H1 (cell line): ENCODE measurements at regions of chr2 and their contacts with region 1.

Region 1: GRCh38 chr2:16105669-16106281 is 165.4 kb downstream of the MYCN start:
- DNase-seq: peak; percentile 83 to 97
- H3K4me3 ChIP-seq: peak overlapping the region; percentile 2 to 51 (median 27); a peak in 5 of 8 replicates
- H3K27ac ChIP-seq: peak overlapping the region; percentile 89
- H3K4me1 ChIP-seq: peaks cover 23 to 41% (median 33%) of the 10 kb centered on the region in 4 experiments
- H3K27me3 ChIP-seq: no peaks in the 10 kb centered on the region
- CTCF ChIP-seq: no peak
- EP300 ChIP-seq: peak in 1 of 2 experiments; percentile 83; a peak in 1 of 3 replicates
- POLR2A ChIP-seq: no peak
- RAD21 ChIP-seq: peak; percentile 20 to 31; a peak in 2 of 4 replicates

Region 2: DNA sequence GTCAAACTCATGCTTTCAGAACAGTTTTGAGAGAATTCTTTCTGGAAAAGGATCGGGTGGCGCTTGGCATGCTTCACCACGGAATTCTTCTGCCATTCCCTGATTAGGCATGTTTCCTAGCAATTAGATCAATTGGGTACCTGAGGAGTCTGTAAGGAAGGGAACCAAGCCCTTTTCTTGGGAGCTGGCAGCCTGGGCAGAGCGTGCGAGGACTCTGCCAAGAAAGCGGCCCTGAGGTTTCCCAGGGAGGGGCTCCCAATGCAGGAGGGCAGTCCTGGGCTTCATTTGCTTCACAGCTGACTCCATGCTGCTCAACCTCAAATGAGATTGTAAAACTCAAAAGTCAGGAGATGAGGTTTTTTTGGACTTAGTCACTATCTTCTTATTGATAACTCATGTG is 105.1 kb before region 1 on chr2:
- CTCF ChIA-PET with region 1: no interaction called
- POLR2A ChIA-PET with region 1: no interaction called
- DNase-seq: no peak
- H3K4me3 ChIP-seq: no peak overlapping the region
- H3K27ac ChIP-seq: no peak overlapping the region
- H3K4me1 ChIP-seq: peaks cover 0 to 3% (median 1%) of the 10 kb centered on the region in 4 experiments; a peak in 1 of 7 replicates
- H3K27me3 ChIP-seq: no peaks in the 10 kb centered on the region
- CTCF ChIP-seq: no peak
- EP300 ChIP-seq: no peak
- POLR2A ChIP-seq: no peak
- RAD21 ChIP-seq: no peak

Region 3: GRCh38 chr2:16115881-16116830 is 10.4 kb after region 1 on chr2:
- CTCF ChIA-PET with region 1: interaction called, 4 read pairs
- POLR2A ChIA-PET with region 1: interaction called, 13 read pairs
- DNase-seq: no peak
- H3K4me3 ChIP-seq: no peak overlapping the region
- H3K27ac ChIP-seq: no peak overlapping the region
- H3K4me1 ChIP-seq: peaks cover 0 to 6% (median 4%) of the 10 kb centered on the region in 4 experiments; a peak in 6 of 7 replicates
- H3K27me3 ChIP-seq: no peaks in the 10 kb centered on the region; a peak in 1 of 7 replicates
- CTCF ChIP-seq: no peak
- EP300 ChIP-seq: no peak
- POLR2A ChIP-seq: no peak
- RAD21 ChIP-seq: no peak